HEK293 (cell line): ENCODE measurements at regions of chr19 and their contacts with region 1.

Region 1: GRCh38 chr19:48933382-48933932 is at the start of gene DHDH:
- H3K4me3 ChIP-seq: peak within 1 kb of the TSS; percentile 35
- H3K27ac ChIP-seq: no peak within 1 kb of the TSS
- H3K4me1 ChIP-seq: peaks cover 3% of the 10 kb centered on the region; the same call in 1 of the 2 replicates
- CTCF ChIP-seq: no peak; the same call in 1 of the 2 replicates

Region 2: DNA sequence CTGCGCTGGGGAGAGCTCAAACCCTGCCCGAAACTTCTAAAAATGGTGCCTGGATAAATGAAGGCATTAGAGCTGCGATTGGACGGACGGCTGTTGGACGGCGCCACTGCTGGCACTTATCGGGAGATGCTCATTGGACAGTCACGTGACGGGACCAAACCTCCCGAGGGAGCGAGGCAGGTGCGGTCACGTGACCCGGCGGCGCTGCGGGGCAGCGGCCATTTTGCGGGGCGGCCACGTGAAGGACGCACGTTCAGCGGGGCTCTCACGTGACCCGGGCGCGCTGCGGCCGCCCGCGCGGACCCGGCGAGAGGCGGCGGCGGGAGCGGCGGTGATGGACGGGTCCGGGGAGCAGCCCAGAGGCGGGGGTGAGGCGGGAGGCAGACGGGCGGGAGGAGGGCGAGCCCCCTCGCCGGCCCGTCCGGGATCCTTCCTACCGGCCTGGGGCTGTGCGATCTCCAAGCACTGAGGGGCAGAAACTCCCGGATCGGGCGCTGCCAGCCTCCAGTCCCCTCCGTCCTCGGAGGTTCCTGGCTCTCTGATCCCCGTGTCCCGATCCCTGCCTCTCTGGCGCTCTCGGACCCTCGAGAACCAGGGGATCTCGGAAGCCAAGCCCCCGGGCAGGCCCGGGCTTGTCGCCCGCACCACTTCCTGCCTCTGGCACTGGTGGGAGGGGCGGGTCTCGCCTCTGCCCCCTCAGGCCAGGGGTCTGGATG is 21.3 kb after region 1 on chr19 and contains the start of gene BAX:
- CTCF ChIA-PET with region 1: interaction called, 14 read pairs
- POLR2A ChIA-PET with region 1: interaction called, 13 read pairs
- H3K4me3 ChIP-seq: peak within 1 kb of the TSS; percentile 93
- H3K27ac ChIP-seq: peak within 1 kb of the TSS; percentile 93
- H3K4me1 ChIP-seq: peaks cover 5% of the 10 kb centered on the region
- CTCF ChIP-seq: peak; percentile 41